CD4-positive, alpha-beta T cell (primary cell): ENCODE measurements at regions of chr10 and their contacts with region 1.

Region 1: DNA sequence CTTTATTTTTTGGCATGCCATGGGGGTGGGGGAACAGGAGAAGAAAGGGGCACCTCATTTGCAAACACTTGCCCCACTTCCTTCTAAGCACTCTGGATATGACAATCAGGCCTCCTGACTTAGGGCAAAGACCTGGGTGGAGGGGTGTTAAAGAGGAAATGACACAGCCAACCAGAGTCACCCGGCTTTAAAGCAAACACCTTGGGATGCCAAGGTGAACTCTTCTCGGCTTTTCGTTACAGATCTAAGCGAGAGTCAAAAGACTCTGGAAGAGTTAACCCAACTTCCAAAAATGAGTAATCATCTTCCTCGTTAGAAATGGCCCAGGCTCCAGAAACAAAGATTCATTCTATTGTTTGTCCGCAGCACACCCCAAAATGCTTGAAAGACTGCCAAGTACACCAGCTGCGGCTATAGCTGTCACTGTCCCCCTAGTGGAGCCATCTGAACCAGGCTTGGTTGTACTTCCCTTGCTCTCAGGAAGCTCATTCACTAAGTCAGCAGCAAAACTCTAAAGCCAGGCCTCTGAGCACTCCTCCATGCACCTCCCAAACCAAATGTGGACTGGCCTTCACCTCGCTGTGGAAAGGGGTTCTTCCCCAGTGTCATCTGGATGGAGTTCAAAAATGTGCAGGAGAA is 24.8 kb downstream of the FAM53B start:
- DNase-seq: peak; percentile 53 to 90 (median 66)
- ATAC-seq: peak; percentile 54
- H3K4me3 ChIP-seq: peak overlapping the region; percentile 29
- H3K4me3 Mint-ChIP-seq: peak overlapping the region; percentile 36
- H3K27ac ChIP-seq: peak overlapping the region; percentile 93 to 95
- H3K27ac Mint-ChIP-seq: peak overlapping the region; percentile 86
- H3K4me1 ChIP-seq: peaks cover 98% of the 10 kb centered on the region
- H3K4me1 Mint-ChIP-seq: peaks cover 92% of the 10 kb centered on the region
- H3K27me3 ChIP-seq: no peaks in the 10 kb centered on the region
- H3K27me3 Mint-ChIP-seq: no peaks in the 10 kb centered on the region
- CTCF ChIP-seq: peak; percentile 68

Region 2: GRCh38 chr10:124626759-124627380 is 92.5 kb before region 1 on chr10:
- CTCF ChIA-PET with region 1: interaction called, 5 read pairs
- POLR2A ChIA-PET with region 1: interaction called, 13 read pairs
- intact Hi-C with region 1: no loop called
- DNase-seq: peak in 13 of 14 experiments; percentile 25 to 77 (median 49)
- ATAC-seq: peak; percentile 89
- H3K4me3 ChIP-seq: no peak overlapping the region
- H3K4me3 Mint-ChIP-seq: peak overlapping the region; percentile 23
- H3K27ac ChIP-seq: peak overlapping the region; percentile 18 to 68
- H3K27ac Mint-ChIP-seq: peak overlapping the region; percentile 92
- H3K4me1 ChIP-seq: peaks cover 86% of the 10 kb centered on the region
- H3K4me1 Mint-ChIP-seq: peaks cover 49% of the 10 kb centered on the region
- H3K27me3 ChIP-seq: no peaks in the 10 kb centered on the region
- H3K27me3 Mint-ChIP-seq: no peaks in the 10 kb centered on the region
- CTCF ChIP-seq: peak; percentile 27

Region 3: DNA sequence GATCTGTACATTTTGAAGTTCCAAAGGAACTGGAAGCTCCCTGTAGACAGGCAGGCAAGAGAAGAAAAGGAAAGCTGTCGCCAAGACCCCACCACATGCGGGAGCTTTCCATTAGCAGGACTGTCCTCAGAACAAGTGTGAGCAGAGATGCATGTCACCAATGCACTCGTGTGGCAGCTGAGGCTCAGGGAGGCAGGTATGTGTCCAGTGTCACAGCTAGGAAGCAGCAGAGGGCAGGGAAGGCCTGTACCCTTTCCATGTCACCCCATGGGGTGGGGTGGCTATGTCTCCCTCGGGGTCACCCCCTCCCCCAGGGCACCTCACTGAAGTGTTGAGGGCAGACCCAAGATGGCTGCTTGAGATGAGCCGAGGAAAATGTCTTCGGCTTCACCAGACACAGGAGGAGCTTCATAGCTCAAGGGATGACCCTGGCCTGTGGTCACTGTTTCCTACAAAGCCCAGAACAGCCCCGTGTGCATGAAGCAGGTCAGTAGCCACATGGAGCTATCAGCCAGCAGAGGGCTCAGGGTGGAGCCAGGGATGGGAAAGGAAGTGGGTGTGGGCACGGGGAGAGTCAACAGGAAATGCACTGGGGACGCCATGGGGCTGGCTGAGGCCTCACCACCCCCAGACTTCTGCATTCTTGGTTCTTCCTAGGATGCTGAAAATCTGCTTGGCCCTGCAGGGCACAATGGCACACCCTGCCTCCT is 71.8 kb before region 1 on chr10:
- CTCF ChIA-PET with region 1: interaction called, 17 read pairs
- POLR2A ChIA-PET with region 1: interaction called, 72 read pairs
- intact Hi-C with region 1: loop called (anchors 2 to 5 kb)
- DNase-seq: peak; percentile 50 to 91 (median 74)
- ATAC-seq: peak; percentile 78
- H3K4me3 ChIP-seq: peak overlapping the region; percentile 35
- H3K4me3 Mint-ChIP-seq: peak overlapping the region; percentile 79
- H3K27ac ChIP-seq: peak overlapping the region; percentile 72 to 78
- H3K27ac Mint-ChIP-seq: peak overlapping the region; percentile 89
- H3K4me1 ChIP-seq: peaks cover 100% of the 10 kb centered on the region
- H3K4me1 Mint-ChIP-seq: peaks cover 90% of the 10 kb centered on the region
- H3K27me3 ChIP-seq: no peaks in the 10 kb centered on the region
- H3K27me3 Mint-ChIP-seq: no peaks in the 10 kb centered on the region
- CTCF ChIP-seq: peak; percentile 64

Region 4: GRCh38 chr10:124671486-124672075 is 47.8 kb before region 1 on chr10:
- CTCF ChIA-PET with region 1: interaction called, 11 read pairs
- POLR2A ChIA-PET with region 1: interaction called, 15 read pairs
- intact Hi-C with region 1: loop called (anchors 2 to 5 kb)
- DNase-seq: peak in 3 of 14 experiments; percentile 47 to 51 (median 50)
- ATAC-seq: peak; percentile 47
- H3K4me3 ChIP-seq: no peak overlapping the region
- H3K4me3 Mint-ChIP-seq: peak overlapping the region; percentile 70
- H3K27ac ChIP-seq: peak overlapping the region in 1 of 2 donors; percentile 33
- H3K27ac Mint-ChIP-seq: peak overlapping the region; percentile 73
- H3K4me1 ChIP-seq: peaks cover 98% of the 10 kb centered on the region
- H3K4me1 Mint-ChIP-seq: peaks cover 92% of the 10 kb centered on the region
- H3K27me3 ChIP-seq: no peaks in the 10 kb centered on the region
- H3K27me3 Mint-ChIP-seq: no peaks in the 10 kb centered on the region
- CTCF ChIP-seq: no peak

Region 5: GRCh38 chr10:124688889-124689670 is 30.3 kb before region 1 on chr10:
- CTCF ChIA-PET with region 1: interaction called, 28 read pairs
- POLR2A ChIA-PET with region 1: interaction called, 19 read pairs
- intact Hi-C with region 1: no loop called
- DNase-seq: peak in 7 of 14 experiments; percentile 23 to 82 (median 58)
- ATAC-seq: peak; percentile 72
- H3K4me3 ChIP-seq: no peak overlapping the region
- H3K4me3 Mint-ChIP-seq: peak overlapping the region; percentile 17
- H3K27ac ChIP-seq: peak overlapping the region in 1 of 2 donors; percentile 32
- H3K27ac Mint-ChIP-seq: peak overlapping the region; percentile 78
- H3K4me1 ChIP-seq: peaks cover 85% of the 10 kb centered on the region
- H3K4me1 Mint-ChIP-seq: peaks cover 73% of the 10 kb centered on the region
- H3K27me3 ChIP-seq: no peaks in the 10 kb centered on the region
- H3K27me3 Mint-ChIP-seq: no peaks in the 10 kb centered on the region
- CTCF ChIP-seq: no peak

Region 6: GRCh38 chr10:124703778-124704427 is 15.4 kb before region 1 on chr10:
- CTCF ChIA-PET with region 1: interaction called, 58 read pairs
- POLR2A ChIA-PET with region 1: interaction called, 133 read pairs
- intact Hi-C with region 1: loop called in 1 of 2 experiments (anchors 2 kb)
- DNase-seq: peak in 1 of 14 experiments; percentile 35
- ATAC-seq: no peak
- H3K4me3 ChIP-seq: no peak overlapping the region
- H3K4me3 Mint-ChIP-seq: peak overlapping the region; percentile 46
- H3K27ac ChIP-seq: peak overlapping the region; percentile 24 to 71
- H3K27ac Mint-ChIP-seq: peak overlapping the region; percentile 91
- H3K4me1 ChIP-seq: peaks cover 100% of the 10 kb centered on the region
- H3K4me1 Mint-ChIP-seq: peaks cover 99% of the 10 kb centered on the region
- H3K27me3 ChIP-seq: no peaks in the 10 kb centered on the region
- H3K27me3 Mint-ChIP-seq: no peaks in the 10 kb centered on the region
- CTCF ChIP-seq: no peak

Region 7: DNA sequence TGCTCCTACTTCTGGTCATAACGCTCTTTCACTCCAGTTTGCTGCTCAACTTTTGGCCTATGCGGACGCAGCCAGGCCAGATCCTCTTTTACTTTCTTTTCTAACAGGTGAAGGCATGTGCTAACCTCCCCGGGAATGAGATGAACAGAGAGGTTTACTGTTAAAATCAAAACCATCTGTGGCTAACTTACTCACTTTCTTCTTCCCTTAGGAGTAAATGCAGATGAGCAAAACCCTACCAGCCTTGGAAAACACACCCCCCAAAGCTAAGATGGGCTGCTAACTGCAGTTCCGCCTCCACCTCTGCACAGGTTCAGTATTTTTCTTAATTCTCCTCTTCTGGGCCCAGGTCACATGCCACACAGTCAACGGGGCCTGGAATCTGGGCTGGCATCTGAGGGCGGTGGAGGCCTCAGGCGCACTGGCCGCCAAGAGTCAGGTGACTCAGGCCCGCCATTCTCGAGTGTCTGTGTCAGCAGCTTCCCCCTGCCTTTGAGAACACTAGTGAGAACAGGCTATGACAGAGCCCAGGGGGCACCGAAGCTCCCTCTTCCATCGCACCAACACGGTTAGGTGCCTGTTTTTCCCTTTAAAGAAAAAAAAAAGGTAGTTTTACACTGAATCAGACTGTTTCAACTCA is 13.7 kb after region 1 on chr10:
- CTCF ChIA-PET with region 1: interaction called, 253 read pairs
- POLR2A ChIA-PET with region 1: interaction called, 83 read pairs
- intact Hi-C with region 1: loop called (anchors 1 to 2 kb)
- DNase-seq: peak in 8 of 14 experiments; percentile 25 to 75 (median 63)
- ATAC-seq: peak; percentile 53
- H3K4me3 ChIP-seq: peak overlapping the region; percentile 36
- H3K4me3 Mint-ChIP-seq: peak overlapping the region; percentile 80
- H3K27ac ChIP-seq: peak overlapping the region; percentile 46 to 81
- H3K27ac Mint-ChIP-seq: peak overlapping the region; percentile 93
- H3K4me1 ChIP-seq: peaks cover 100% of the 10 kb centered on the region
- H3K4me1 Mint-ChIP-seq: peaks cover 97% of the 10 kb centered on the region
- H3K27me3 ChIP-seq: no peaks in the 10 kb centered on the region
- H3K27me3 Mint-ChIP-seq: no peaks in the 10 kb centered on the region
- CTCF ChIP-seq: no peak

Region 8: DNA sequence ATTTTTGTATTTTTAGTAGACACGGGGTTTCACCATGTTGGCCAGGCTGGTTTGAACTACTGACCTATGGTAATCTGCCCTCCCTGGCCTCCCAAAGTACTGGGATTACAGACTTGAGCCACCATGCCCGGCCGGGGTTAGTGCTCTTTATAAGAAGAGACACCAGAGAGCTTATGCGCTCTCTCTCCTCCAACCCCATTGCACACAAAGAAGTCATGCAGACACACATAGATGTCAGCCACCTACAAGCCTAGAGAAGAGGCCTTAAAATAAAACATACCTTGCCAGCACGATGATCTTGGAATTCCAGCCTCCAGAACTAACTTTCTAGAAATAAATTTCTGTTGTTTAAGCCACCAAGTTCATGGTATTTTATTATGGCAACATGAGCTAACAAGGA is 34.9 kb after region 1 on chr10:
- CTCF ChIA-PET with region 1: no interaction called
- POLR2A ChIA-PET with region 1: no interaction called
- intact Hi-C with region 1: no loop called
- DNase-seq: no peak
- ATAC-seq: no peak
- H3K4me3 ChIP-seq: no peak overlapping the region
- H3K4me3 Mint-ChIP-seq: no peak overlapping the region
- H3K27ac ChIP-seq: no peak overlapping the region
- H3K27ac Mint-ChIP-seq: no peak overlapping the region
- H3K4me1 ChIP-seq: no peaks in the 10 kb centered on the region
- H3K4me1 Mint-ChIP-seq: peaks cover 4% of the 10 kb centered on the region
- H3K27me3 ChIP-seq: no peaks in the 10 kb centered on the region
- H3K27me3 Mint-ChIP-seq: no peaks in the 10 kb centered on the region
- CTCF ChIP-seq: no peak